ENCODE measurements at regions of chr15 and their contacts with region 1.

Region 1: DNA sequence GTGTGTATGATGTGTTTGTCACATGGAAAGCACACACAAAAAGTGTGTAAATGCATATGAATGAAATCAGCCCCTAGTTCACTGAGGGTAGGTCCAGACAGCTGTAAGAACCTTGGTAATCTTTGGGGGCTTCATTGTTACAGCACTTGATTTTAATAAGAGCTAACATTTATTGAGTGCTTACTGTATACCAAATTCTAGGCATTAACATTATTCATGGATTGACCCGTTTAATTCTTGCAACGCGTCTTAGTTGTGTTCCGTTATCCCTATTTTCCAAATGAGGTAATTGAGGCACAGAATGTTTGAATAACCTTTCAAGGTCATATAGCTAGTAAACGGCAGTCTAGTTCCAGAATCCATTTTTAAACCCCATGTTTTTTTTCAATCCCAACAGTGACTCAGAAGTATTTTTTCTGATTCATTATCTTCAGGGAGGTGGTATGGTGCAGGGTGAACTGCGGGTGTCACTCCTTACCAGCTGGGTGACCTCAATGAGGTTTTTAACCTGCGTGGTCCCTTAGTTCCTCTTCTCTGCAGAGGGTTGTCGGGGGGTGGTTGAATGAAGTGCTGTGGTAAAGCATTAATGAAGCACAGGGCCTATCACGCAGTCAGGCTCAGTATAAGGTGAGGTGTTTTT is 14.2 kb downstream of the RAB8B start:
- DNase-seq: no peak
- CTCF ChIP-seq: no peak

Region 2: DNA sequence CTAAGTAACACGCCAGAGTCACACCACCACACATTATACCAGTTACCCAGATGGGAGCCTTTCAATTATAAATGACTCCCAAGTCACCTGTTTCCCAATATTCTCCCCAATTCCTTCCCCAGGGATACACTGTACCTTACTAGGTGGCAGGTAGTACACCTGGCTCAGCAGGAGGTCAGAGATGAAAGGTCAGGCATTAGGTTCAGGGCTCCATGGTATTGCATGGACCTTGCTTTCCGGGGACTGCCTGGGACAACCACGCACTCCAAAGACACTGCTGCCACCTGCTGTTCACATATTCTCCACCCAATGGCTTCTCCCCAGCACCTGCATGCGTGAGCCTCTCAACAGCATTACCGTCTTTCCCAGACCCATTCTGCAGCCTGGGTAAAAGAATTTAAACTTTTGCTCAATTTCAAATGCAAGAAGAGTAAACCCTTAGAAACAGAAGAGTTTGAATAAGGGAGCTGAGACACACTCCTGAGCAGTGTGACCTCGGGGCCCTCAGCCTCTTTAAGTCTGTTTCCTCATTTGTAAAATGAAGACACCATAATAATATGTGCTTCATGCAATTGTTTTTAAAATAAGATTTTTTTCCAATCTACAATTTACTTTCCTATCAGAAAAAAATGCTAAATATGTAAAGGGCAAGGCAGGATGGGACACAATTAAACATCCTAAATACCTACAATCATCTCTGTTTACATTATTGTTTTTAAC is 109.9 kb before region 1 on chr15:
- CTCF ChIA-PET with region 1: no interaction called
- POLR2A ChIA-PET with region 1: no interaction called
- DNase-seq: peak; percentile 78
- CTCF ChIP-seq: peak; percentile 86

Region 3: GRCh38 chr15:63157118-63157843 is 46.3 kb before region 1 on chr15 and contains the start of gene RPS27L:
- CTCF ChIA-PET with region 1: no interaction called
- POLR2A ChIA-PET with region 1: no interaction called
- DNase-seq: peak; percentile 91
- CTCF ChIP-seq: no peak

Region 4: DNA sequence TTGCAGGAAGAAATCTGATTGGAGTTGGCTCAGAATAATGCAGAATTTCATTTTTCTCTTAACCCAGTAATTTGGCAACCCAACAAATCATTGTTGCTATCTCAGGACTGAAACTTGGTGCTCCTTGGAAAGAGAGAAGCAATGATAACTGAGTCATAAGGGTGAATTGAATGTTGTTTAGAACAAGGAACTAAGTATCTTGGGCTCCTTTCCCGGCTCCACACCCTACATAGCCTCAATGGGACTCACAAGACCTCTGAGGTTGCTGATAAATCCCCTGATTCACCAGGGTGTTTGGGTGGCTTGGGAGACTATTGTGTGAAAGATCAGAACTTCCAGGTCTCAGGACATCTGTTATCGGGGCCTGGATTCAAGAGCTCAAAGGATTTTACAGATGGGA is 21.9 kb before region 1 on chr15:
- CTCF ChIA-PET with region 1: no interaction called
- POLR2A ChIA-PET with region 1: no interaction called
- DNase-seq: no peak
- CTCF ChIP-seq: no peak

Region 5: GRCh38 chr15:63191895-63192618 is 11.5 kb before region 1 on chr15:
- CTCF ChIA-PET with region 1: interaction called, 18 read pairs
- POLR2A ChIA-PET with region 1: interaction called, 4 read pairs
- DNase-seq: peak; percentile 62
- CTCF ChIP-seq: no peak